Activated CD8-positive, alpha-beta memory T cell treated with anti-CD3 and anti-CD28 coated beads, Interleukin-2, amount 10 ng/mL, durations not matched to agents 7 days and 5 days (primary cell): ENCODE measurements at regions of chr14 and their contacts with region 1.

Region 1: GRCh38 chr14:20327005-20327869 is 5.8 kb downstream of the CCNB1IP1 start:
- DNase-seq: no peak
- ATAC-seq: peak; percentile 45
- H3K4me3 Mint-ChIP-seq: peak overlapping the region; percentile 1
- H3K27ac Mint-ChIP-seq: peak overlapping the region; percentile 33
- H3K4me1 Mint-ChIP-seq: peaks cover 48% of the 10 kb centered on the region
- H3K27me3 Mint-ChIP-seq: no peaks in the 10 kb centered on the region

Region 2: DNA sequence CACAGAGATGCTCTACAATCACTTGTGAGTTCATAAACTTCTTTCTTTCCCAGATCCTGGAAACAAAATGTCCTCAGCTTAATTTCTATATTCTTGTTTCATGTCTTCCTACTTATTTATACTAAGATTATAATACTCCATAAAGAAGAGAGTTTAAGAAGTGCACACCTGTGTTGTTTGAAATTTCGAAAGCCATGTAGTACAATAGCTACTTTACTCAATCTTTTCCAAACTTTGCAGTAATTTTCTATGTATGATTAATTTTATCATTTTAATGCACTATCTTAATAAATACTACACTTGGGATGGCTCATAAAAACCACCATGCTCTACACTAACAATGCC is 21.2 kb before region 1 on chr14:
- CTCF ChIA-PET with region 1: interaction called, 13 read pairs
- DNase-seq: no peak
- ATAC-seq: no peak
- H3K4me3 Mint-ChIP-seq: peak overlapping the region; percentile 82
- H3K27ac Mint-ChIP-seq: peak overlapping the region; percentile 76
- H3K4me1 Mint-ChIP-seq: peaks cover 32% of the 10 kb centered on the region
- H3K27me3 Mint-ChIP-seq: no peaks in the 10 kb centered on the region

Region 3: DNA sequence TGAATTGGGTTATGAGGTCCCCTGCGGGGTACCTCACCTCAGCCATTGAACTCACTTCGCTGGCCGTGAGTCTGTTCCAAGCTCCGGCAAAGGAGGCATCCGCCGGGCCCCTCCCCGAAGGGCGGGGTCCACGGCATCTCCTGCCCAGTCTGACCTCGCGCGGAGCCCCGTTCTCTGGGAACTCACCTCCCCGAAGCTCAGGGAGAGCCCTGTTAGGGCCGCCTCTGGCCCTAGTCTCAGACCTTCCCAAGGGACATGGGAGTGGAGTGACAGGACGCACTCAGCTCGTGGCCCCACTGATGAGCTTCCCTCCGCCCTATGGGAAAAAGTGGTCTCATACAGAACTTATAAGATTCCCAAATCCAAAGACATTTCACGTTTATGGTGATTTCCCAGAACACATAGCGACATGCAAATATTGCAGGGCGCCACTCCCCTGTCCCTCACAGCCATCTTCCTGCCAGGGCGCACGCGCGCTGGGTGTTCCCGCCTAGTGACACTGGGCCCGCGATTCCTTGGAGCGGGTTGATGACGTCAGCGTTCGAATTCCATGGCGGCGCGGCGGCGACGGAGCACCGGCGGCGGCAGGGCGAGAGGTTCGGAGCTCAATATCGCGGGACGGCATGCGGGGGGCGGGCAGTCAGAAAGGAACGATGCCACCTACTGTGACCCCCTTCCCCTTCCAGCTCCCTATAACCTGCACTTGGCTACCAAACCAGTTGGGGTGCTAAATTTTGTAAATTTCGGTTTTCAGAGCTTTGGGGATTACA is 16.0 kb after region 1 on chr14 and contains the start of gene PARP2:
- CTCF ChIA-PET with region 1: interaction called, 67 read pairs
- DNase-seq: peak; percentile 98
- ATAC-seq: peak; percentile 93
- H3K4me3 Mint-ChIP-seq: peak within 1 kb of the TSS; percentile 83
- H3K27ac Mint-ChIP-seq: peak within 1 kb of the TSS; percentile 86
- H3K4me1 Mint-ChIP-seq: peaks cover 18% of the 10 kb centered on the region
- H3K27me3 Mint-ChIP-seq: no peaks in the 10 kb centered on the region
- total RNA-seq, gene PARP2: 32.6 to 38.4 TPM

Region 4: DNA sequence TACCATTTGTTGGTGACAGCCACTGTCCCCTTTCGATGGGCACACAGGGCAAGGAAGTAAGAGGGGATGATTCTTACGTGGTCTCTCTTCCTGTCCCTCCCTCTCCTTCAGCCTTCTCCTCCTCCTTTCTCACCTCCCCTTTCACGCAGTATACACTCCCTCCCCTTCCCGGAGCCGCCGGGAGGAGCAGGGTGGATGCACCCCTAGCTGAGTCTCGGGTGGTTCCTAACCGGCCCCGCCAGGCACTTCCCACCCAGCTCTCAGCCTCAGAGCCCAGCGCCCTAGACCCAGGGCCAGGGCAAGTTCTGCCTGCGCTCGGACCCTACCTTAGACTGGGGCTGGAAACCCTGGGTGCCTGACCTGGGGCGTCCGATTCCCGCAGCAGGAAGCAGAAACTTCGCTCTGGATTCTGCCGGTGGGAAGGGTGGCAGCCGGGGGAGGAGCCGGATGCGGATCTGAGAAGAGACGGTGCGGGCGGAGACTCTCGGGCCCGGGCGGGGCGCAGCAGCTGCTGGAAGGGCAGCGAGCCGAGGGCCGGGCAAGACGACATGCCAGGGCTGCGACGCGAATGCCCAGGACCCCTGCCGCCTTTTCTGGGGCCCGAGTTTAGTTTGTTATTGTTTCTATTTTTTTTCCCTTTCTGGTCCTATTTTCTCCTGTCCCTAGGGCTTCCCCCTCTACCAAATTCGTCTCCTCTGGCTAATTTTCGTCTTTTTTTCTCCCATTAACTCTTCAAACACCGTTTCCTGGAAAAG is 86.0 kb after region 1 on chr14 and contains the start of gene TEP1:
- CTCF ChIA-PET with region 1: interaction called, 15 read pairs
- DNase-seq: peak; percentile 86
- ATAC-seq: peak; percentile 93
- H3K4me3 Mint-ChIP-seq: peak within 1 kb of the TSS; percentile 94
- H3K27ac Mint-ChIP-seq: peak within 1 kb of the TSS; percentile 97
- H3K4me1 Mint-ChIP-seq: peaks cover 37% of the 10 kb centered on the region
- H3K27me3 Mint-ChIP-seq: no peaks in the 10 kb centered on the region
- total RNA-seq, gene TEP1: 44.9 to 52.9 TPM

Region 5: DNA sequence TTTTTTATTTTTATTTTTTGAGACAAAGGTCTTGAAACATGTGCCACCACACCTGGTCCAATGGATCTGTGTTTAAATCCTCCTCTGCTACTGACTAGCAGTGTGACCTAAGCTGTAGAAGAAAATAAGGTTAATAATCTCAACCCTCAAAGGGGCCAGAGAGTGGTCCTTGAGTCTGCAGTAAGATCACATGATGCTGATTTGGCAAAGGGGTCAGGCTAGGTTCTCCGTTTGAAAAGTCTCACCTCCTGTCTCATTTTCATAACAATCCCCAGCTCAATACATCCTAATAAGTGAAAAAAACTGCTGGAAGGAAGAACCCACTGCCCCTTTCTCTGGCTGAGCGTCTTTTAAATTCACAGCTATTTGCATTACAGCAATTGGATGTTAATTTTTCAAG is 94.0 kb after region 1 on chr14:
- CTCF ChIA-PET with region 1: interaction called, 15 read pairs
- DNase-seq: no peak
- ATAC-seq: no peak
- H3K4me3 Mint-ChIP-seq: no peak overlapping the region
- H3K27ac Mint-ChIP-seq: no peak overlapping the region
- H3K4me1 Mint-ChIP-seq: peaks cover 2% of the 10 kb centered on the region
- H3K27me3 Mint-ChIP-seq: no peaks in the 10 kb centered on the region

Region 6: DNA sequence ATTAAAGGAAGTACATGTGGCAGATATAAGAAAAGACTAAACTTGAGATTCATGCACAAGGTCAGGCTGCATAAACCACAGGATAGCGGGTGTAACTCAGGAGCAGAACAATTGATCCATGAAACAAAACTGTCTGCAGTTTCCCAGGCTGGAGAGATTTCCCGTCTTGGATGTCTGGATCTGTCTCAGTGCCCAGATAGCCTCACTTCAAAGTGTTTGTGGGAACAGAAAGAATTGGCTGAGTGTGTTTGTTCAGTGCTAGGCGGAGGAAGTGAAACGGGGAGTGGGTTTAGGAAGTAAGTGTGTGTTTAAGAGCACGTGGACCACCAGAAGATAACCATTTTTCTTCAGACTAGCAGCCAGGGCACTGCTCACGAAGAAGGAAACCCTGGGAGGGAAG is 176.7 kb after region 1 on chr14:
- CTCF ChIA-PET with region 1: no interaction called
- DNase-seq: no peak
- ATAC-seq: no peak
- H3K4me3 Mint-ChIP-seq: no peak overlapping the region
- H3K27ac Mint-ChIP-seq: no peak overlapping the region
- H3K4me1 Mint-ChIP-seq: peaks cover 4% of the 10 kb centered on the region
- H3K27me3 Mint-ChIP-seq: peaks cover 9% of the 10 kb centered on the region

Region 7: DNA sequence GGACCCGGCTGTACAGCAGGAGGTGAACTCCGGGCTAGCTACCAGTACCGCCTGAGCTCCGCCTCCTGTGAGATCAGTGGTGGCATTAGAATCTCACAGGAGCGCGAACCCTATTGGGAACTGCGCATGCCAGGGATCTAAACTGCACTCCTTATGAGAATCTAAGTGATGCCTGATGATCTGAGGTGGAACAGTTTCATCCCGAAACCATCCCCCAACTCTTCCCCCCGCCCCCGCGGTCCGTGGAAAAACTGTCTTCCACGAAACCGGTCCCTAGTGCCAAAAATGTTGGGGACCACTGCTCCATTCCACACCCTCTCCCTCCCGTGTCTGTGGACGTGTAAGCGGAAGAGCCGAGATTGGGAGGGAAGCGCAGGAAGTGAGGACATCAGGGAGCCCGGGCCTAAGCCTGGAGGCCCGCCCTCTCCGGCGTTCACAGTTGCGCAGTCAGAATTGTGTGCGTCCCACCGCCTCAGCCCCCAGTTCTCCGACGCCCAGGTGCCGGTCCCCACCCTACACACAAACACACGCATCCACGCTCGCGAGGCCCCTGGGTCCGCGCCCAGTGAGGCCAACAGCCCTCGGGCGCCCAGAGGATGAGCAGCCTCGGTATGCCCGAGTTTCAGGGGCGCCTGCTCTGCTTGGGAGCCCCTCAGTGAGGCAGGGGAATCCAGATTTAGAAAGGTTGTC is 355.3 kb after region 1 on chr14:
- CTCF ChIA-PET with region 1: interaction called, 12 read pairs
- DNase-seq: peak; percentile 86
- ATAC-seq: peak; percentile 63
- H3K4me3 Mint-ChIP-seq: no peak overlapping the region
- H3K27ac Mint-ChIP-seq: no peak overlapping the region
- H3K4me1 Mint-ChIP-seq: peaks cover 12% of the 10 kb centered on the region
- H3K27me3 Mint-ChIP-seq: no peaks in the 10 kb centered on the region

Region 8: GRCh38 chr14:20690848-20691523 is 363.7 kb after region 1 on chr14:
- CTCF ChIA-PET with region 1: interaction called, 12 read pairs
- DNase-seq: peak; percentile 57
- ATAC-seq: peak; percentile 81
- H3K4me3 Mint-ChIP-seq: no peak overlapping the region
- H3K27ac Mint-ChIP-seq: peak overlapping the region; percentile 69
- H3K4me1 Mint-ChIP-seq: peaks cover 33% of the 10 kb centered on the region
- H3K27me3 Mint-ChIP-seq: no peaks in the 10 kb centered on the region

Region 9: DNA sequence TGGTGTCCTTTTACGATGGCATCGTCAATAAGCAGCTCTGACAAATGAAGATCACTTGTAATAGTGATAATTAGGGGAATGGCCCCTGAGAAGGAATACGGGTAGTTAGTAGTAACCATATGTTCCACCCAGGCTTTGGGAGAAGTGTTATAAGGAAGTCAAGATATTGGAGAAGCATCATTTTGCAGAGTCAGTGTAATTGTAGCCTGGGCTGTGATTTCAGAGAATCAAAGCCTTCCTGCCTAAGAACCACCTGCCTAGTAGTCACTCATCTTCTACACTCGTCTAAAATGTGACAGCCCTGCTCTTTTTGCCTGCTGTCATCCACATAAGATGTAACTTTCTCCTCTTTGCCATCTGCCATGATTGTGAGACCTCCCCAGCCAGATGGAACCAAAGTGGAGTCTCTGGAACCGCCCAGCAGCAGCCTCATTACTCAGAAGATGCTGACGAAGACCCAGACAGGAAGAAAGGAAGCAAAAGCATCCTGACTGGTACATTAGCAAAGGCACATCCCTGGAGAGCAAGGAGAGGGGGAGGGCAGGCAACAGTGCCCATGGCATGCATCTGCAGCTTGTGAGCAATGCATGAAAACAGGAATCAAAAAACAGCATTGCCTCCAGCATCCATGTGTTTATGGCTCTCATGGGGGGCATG is 405.9 kb after region 1 on chr14:
- CTCF ChIA-PET with region 1: no interaction called
- DNase-seq: no peak
- ATAC-seq: no peak
- H3K4me3 Mint-ChIP-seq: no peak overlapping the region
- H3K27ac Mint-ChIP-seq: no peak overlapping the region
- H3K4me1 Mint-ChIP-seq: no peaks in the 10 kb centered on the region
- H3K27me3 Mint-ChIP-seq: peaks cover 10% of the 10 kb centered on the region